ENCODE measurements at regions of chr13 and their contacts with region 1.

Region 1: GRCh38 chr13:73708393-73708985 is 425.7 kb downstream of the KLF12 start:
- DNase-seq: peak; percentile 57
- ATAC-seq: peak; percentile 94
- H3K4me3 ChIP-seq: no peak overlapping the region
- H3K27ac ChIP-seq: no peak overlapping the region
- H3K4me1 ChIP-seq: no peaks in the 10 kb centered on the region
- H3K27me3 ChIP-seq: no peaks in the 10 kb centered on the region
- CTCF ChIP-seq: peak; percentile 62 to 92 (median 79)
- POLR2A ChIP-seq: no peak
- RAD21 ChIP-seq: peak; percentile 89

Region 2: GRCh38 chr13:72808917-72809500 is 899.5 kb before region 1 on chr13:
- CTCF ChIA-PET with region 1: no interaction called
- POLR2A ChIA-PET with region 1: no interaction called
- RAD21 ChIA-PET with region 1: interaction called in 1 of 2 experiments, 3 read pairs
- intact Hi-C with region 1: loop called (anchors 1 kb)
- DNase-seq: no peak
- ATAC-seq: no peak
- H3K4me3 ChIP-seq: no peak overlapping the region
- H3K27ac ChIP-seq: no peak overlapping the region
- H3K4me1 ChIP-seq: no peaks in the 10 kb centered on the region
- H3K27me3 ChIP-seq: no peaks in the 10 kb centered on the region
- CTCF ChIP-seq: peak; percentile 12 to 67 (median 33); a peak in 3 of 6 replicates
- POLR2A ChIP-seq: no peak
- RAD21 ChIP-seq: peak; percentile 32

Region 3: DNA sequence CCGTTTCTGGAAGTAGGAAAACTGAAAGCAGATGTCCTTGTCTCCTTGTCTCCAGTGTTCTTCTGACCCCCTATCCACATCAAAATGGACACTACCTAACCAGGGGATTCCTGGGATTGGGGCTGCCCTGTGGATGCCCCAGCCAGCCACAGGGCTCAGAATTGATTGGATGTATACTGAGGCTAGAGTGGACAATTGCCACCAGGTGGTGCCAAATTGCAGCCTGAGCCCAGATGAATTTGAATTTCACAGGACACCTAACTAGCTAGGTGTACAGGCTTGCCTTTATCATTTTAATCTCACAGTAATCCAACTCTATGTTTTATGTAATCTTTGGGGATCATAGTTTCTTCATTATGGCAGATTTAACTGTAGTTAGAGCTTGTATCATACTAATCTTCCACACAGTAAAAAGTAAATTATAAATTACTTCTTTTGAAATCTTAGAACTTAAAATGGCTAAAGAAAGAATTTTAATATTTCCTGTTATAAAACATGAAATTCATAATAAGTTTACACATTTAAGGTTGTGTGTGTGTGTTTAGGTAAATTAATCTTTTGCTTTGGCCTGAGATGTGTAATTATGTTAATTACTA is 868.6 kb before region 1 on chr13:
- CTCF ChIA-PET with region 1: interaction called, 5 read pairs
- POLR2A ChIA-PET with region 1: no interaction called
- RAD21 ChIA-PET with region 1: no interaction called
- intact Hi-C with region 1: loop called (anchors 1 kb)
- DNase-seq: peak; percentile 47
- ATAC-seq: peak; percentile 100
- H3K4me3 ChIP-seq: no peak overlapping the region
- H3K27ac ChIP-seq: no peak overlapping the region
- H3K4me1 ChIP-seq: peaks cover 0 to 5% of the 10 kb centered on the region in 2 experiments; a peak in 1 of 4 replicates
- H3K27me3 ChIP-seq: no peaks in the 10 kb centered on the region
- CTCF ChIP-seq: peak; percentile 53 to 88 (median 78); a peak in 5 of 6 replicates
- POLR2A ChIP-seq: no peak
- RAD21 ChIP-seq: peak; percentile 91

Region 4: GRCh38 chr13:73058736-73059459 is 649.6 kb before region 1 on chr13 and contains the start of gene KLF5:
- CTCF ChIA-PET with region 1: no interaction called
- POLR2A ChIA-PET with region 1: no interaction called
- RAD21 ChIA-PET with region 1: no interaction called
- intact Hi-C with region 1: loop called (anchors 5 kb)
- DNase-seq: peak; percentile 94
- ATAC-seq: peak; percentile 91
- H3K4me3 ChIP-seq: peak within 1 kb of the TSS; percentile 75 to 86
- H3K27ac ChIP-seq: peak within 1 kb of the TSS; percentile 83
- H3K4me1 ChIP-seq: peaks cover 34 to 61% of the 10 kb centered on the region in 2 experiments
- H3K27me3 ChIP-seq: no peaks in the 10 kb centered on the region
- CTCF ChIP-seq: no peak
- POLR2A ChIP-seq: peak; percentile 94
- RAD21 ChIP-seq: 0 out of 2 replicates have a peak, but pooled peaks have one; percentile 4
- total RNA-seq, gene KLF5: 59.2 TPM

Region 5: GRCh38 chr13:73228546-73228945 is 479.9 kb before region 1 on chr13:
- CTCF ChIA-PET with region 1: no interaction called
- POLR2A ChIA-PET with region 1: no interaction called
- RAD21 ChIA-PET with region 1: no interaction called
- intact Hi-C with region 1: loop called (anchors 5 kb)
- DNase-seq: no peak
- ATAC-seq: peak; percentile 66
- H3K4me3 ChIP-seq: no peak overlapping the region
- H3K27ac ChIP-seq: no peak overlapping the region
- H3K4me1 ChIP-seq: peaks cover 2 to 9% of the 10 kb centered on the region in 2 experiments; a peak in 1 of 4 replicates
- H3K27me3 ChIP-seq: no peaks in the 10 kb centered on the region
- CTCF ChIP-seq: peak in 2 of 3 experiments; percentile 22 to 34; a peak in 3 of 6 replicates
- POLR2A ChIP-seq: no peak
- RAD21 ChIP-seq: peak; percentile 31; the same call in 1 of the 2 replicates

Region 6: DNA sequence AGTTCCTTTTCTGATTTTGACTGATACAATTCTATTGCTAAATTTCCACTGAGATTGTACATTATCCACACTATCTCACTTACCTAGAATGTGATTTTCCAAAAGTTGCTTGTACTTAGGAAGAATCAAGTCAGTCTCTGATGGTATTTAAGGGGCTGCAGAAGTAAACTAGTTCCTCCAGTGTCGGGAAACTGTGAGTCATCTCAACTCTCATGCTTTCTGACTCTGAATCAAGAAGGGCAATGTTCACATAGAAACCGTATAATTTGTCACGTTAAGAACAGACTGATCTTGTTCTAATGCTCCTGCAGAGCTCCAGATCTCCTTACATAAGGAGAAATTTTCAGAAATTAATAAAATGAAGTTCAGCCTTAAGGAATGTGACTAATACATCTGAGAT is 280.4 kb before region 1 on chr13:
- CTCF ChIA-PET with region 1: no interaction called
- POLR2A ChIA-PET with region 1: no interaction called
- RAD21 ChIA-PET with region 1: no interaction called
- intact Hi-C with region 1: loop called (anchors 10 kb)
- DNase-seq: peak; percentile 81
- ATAC-seq: peak; percentile 72
- H3K4me3 ChIP-seq: peak overlapping the region in 1 of 2 experiments; percentile 15; a peak in 1 of 4 replicates
- H3K27ac ChIP-seq: peak overlapping the region; percentile 55; the same call in 1 of the 2 replicates
- H3K4me1 ChIP-seq: peaks cover 18 to 36% of the 10 kb centered on the region in 2 experiments
- H3K27me3 ChIP-seq: no peaks in the 10 kb centered on the region
- CTCF ChIP-seq: no peak
- POLR2A ChIP-seq: no peak
- RAD21 ChIP-seq: peak; percentile 12; the same call in 1 of the 2 replicates